Caco-2 (cell line): ENCODE measurements at regions of chr3 and their contacts with region 1.

Region 1: DNA sequence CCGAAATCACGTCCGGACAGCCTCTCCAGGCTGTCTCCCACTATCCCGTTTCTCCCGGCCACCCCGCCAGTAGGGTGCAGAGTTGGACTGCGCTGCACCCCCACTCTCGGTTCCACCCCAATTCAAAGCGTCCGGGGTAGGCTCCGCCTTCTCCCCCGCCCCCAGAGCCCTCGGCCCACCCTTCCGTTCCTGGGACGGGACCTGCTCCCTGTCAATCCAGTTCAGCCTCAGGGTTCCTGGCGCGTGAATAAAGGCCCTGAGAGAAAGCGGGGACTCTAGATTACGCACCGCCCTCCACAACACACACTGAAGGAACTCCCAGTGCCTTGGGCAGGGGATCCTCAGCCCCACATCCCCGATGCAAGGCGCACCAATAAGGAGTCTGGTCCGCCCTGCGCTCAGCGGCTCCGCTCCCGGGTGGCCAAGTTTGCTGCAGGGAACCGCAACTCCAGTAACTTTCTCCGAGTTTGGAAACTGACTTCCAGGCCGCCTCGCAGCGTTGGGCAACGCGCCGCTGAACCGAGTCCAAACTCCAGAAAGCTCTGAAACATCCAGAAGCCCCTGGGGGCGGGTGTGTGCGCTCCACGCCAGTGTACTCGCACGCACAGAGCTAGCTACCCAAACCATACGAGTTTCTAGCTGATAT is 1.9 kb downstream of the ADAMTS9 start:
- DNase-seq: peak; percentile 91 to 94
- H3K4me3 ChIP-seq: peak overlapping the region; percentile 71
- H3K4me3 Mint-ChIP-seq: peak overlapping the region; percentile 87
- H3K27ac Mint-ChIP-seq: peak overlapping the region; percentile 14
- H3K4me1 ChIP-seq: peaks cover 6% of the 10 kb centered on the region; the same call in 1 of the 2 replicates
- H3K4me1 Mint-ChIP-seq: peaks cover 7% of the 10 kb centered on the region
- H3K27me3 ChIP-seq: no peaks in the 10 kb centered on the region
- H3K27me3 Mint-ChIP-seq: peaks cover 3% of the 10 kb centered on the region
- CTCF ChIP-seq: peak; percentile 22 to 56

Region 2: DNA sequence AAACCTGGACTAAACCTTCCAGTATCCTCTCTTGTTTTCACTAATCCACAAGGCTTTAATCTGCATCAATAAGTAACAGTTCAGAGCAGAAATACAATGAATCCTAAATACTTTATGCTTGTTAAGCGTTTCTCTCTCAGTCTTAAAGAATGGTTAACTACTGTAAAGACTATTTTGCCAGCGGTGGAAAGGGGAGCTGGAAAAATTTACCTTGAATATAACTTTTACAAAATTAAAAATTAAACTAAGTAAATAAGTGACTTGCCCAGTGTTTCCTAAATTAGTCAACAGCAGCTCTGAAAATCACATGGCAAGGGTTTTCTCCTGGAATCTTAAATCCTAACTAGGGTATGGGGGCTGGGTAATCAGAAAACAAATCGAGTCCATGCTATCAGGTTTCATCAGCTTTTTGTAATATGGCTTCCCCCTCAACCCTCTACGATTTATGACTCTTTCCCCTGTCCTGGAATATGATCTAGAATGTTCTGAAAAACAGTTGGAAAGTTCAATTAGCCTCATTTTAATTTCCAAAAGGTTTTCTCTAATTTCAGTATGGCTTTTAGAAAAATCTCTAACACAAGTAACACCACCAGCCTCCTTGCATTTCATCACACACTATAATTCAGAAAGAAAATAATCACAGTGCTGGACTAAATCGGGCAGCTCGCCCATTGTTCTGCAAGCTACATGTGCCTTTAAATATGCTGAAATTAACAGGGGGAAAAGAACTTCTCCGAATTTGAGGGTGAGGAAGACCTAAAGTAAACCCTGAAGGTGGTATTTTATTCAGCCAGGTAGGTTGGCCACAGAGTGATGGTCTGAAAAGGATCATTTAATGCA is 131.6 kb before region 1 on chr3:
- CTCF ChIA-PET with region 1: no interaction called
- POLR2A ChIA-PET with region 1: no interaction called
- intact Hi-C with region 1: loop called (anchors 5 kb)
- DNase-seq: no peak
- H3K4me3 ChIP-seq: no peak overlapping the region
- H3K4me3 Mint-ChIP-seq: no peak overlapping the region
- H3K27ac Mint-ChIP-seq: no peak overlapping the region
- H3K4me1 ChIP-seq: peaks cover 29% of the 10 kb centered on the region
- H3K4me1 Mint-ChIP-seq: peaks cover 23% of the 10 kb centered on the region
- H3K27me3 ChIP-seq: no peaks in the 10 kb centered on the region
- H3K27me3 Mint-ChIP-seq: peaks cover 3% of the 10 kb centered on the region
- CTCF ChIP-seq: no peak

Region 3: DNA sequence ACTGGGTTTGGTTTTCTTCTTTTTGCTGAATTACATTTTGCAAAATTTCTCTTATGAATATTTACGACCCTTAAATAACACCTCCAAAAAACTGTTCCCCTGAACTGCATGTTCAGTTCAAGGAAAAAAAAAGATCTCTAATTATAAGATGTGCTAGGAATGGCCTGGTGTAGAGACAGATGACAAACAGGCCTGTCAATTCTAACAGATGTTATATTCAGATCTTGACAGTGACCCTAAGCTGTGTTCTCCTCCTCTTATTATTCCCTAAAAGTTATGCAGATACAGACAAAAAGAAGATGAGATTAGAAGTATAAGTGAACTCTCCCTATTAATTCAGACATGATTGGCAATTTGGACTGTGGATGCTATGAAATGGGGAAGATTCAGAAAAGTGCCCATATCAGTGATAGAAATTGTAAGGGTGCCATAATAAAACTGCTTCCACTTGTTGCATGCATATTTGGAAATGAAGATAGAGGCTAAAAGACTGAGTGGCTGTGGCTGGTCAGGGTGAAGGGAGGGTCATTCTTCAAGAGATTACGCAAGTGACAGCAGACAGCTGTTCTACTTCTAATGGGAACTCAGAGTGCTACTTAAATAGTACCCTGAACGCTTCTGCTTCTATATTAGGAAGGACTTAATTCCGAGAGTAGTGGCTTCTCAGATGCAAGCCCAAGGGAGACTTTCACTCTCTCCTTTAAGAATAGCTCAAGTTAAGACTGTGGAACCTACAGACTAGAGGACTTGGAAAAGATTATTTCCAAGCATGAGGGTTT is 73.7 kb before region 1 on chr3:
- CTCF ChIA-PET with region 1: no interaction called
- POLR2A ChIA-PET with region 1: no interaction called
- intact Hi-C with region 1: loop called (anchors 2 kb)
- DNase-seq: peak; percentile 37 to 50
- H3K4me3 ChIP-seq: no peak overlapping the region
- H3K4me3 Mint-ChIP-seq: peak overlapping the region; percentile 68
- H3K27ac Mint-ChIP-seq: peak overlapping the region; percentile 90
- H3K4me1 ChIP-seq: peaks cover 27% of the 10 kb centered on the region
- H3K4me1 Mint-ChIP-seq: peaks cover 20% of the 10 kb centered on the region
- H3K27me3 ChIP-seq: no peaks in the 10 kb centered on the region; the same call in 1 of the 2 replicates
- H3K27me3 Mint-ChIP-seq: no peaks in the 10 kb centered on the region
- CTCF ChIP-seq: no peak

Region 4: GRCh38 chr3:64837126-64837738 is 151.3 kb after region 1 on chr3:
- CTCF ChIA-PET with region 1: no interaction called
- POLR2A ChIA-PET with region 1: no interaction called
- intact Hi-C with region 1: no loop called
- DNase-seq: no peak
- H3K4me3 ChIP-seq: no peak overlapping the region
- H3K4me3 Mint-ChIP-seq: no peak overlapping the region
- H3K27ac Mint-ChIP-seq: no peak overlapping the region
- H3K4me1 ChIP-seq: no peaks in the 10 kb centered on the region
- H3K4me1 Mint-ChIP-seq: no peaks in the 10 kb centered on the region
- H3K27me3 ChIP-seq: no peaks in the 10 kb centered on the region
- H3K27me3 Mint-ChIP-seq: no peaks in the 10 kb centered on the region
- CTCF ChIP-seq: no peak

Region 5: GRCh38 chr3:65080432-65080831 is 394.5 kb after region 1 on chr3:
- CTCF ChIA-PET with region 1: no interaction called
- POLR2A ChIA-PET with region 1: no interaction called
- intact Hi-C with region 1: loop called (anchors 10 kb)
- DNase-seq: peak; percentile 26 to 39
- H3K4me3 ChIP-seq: no peak overlapping the region
- H3K4me3 Mint-ChIP-seq: no peak overlapping the region
- H3K27ac Mint-ChIP-seq: no peak overlapping the region
- H3K4me1 ChIP-seq: peaks cover 2% of the 10 kb centered on the region; the same call in 1 of the 2 replicates
- H3K4me1 Mint-ChIP-seq: no peaks in the 10 kb centered on the region
- H3K27me3 ChIP-seq: no peaks in the 10 kb centered on the region
- H3K27me3 Mint-ChIP-seq: no peaks in the 10 kb centered on the region
- CTCF ChIP-seq: peak in 1 of 2 experiments; percentile 47

Region 6: GRCh38 chr3:65245133-65246063 is 559.5 kb after region 1 on chr3:
- CTCF ChIA-PET with region 1: no interaction called
- POLR2A ChIA-PET with region 1: no interaction called
- intact Hi-C with region 1: loop called (anchors 5 kb)
- DNase-seq: no peak
- H3K4me3 ChIP-seq: no peak overlapping the region
- H3K4me3 Mint-ChIP-seq: no peak overlapping the region
- H3K27ac Mint-ChIP-seq: no peak overlapping the region
- H3K4me1 ChIP-seq: peaks cover 16% of the 10 kb centered on the region
- H3K4me1 Mint-ChIP-seq: peaks cover 16% of the 10 kb centered on the region
- H3K27me3 ChIP-seq: no peaks in the 10 kb centered on the region
- H3K27me3 Mint-ChIP-seq: no peaks in the 10 kb centered on the region
- CTCF ChIP-seq: no peak

Region 7: GRCh38 chr3:65412588-65412987 is 726.7 kb after region 1 on chr3:
- CTCF ChIA-PET with region 1: no interaction called
- POLR2A ChIA-PET with region 1: no interaction called
- intact Hi-C with region 1: loop called (anchors 10 kb)
- DNase-seq: peak; percentile 16 to 50
- H3K4me3 ChIP-seq: no peak overlapping the region
- H3K4me3 Mint-ChIP-seq: no peak overlapping the region
- H3K27ac Mint-ChIP-seq: no peak overlapping the region
- H3K4me1 ChIP-seq: no peaks in the 10 kb centered on the region
- H3K4me1 Mint-ChIP-seq: peaks cover 4% of the 10 kb centered on the region
- H3K27me3 ChIP-seq: no peaks in the 10 kb centered on the region
- H3K27me3 Mint-ChIP-seq: no peaks in the 10 kb centered on the region
- CTCF ChIP-seq: peak in 1 of 2 experiments; percentile 37

Region 8: GRCh38 chr3:65439641-65440284 is 753.8 kb after region 1 on chr3:
- CTCF ChIA-PET with region 1: no interaction called
- POLR2A ChIA-PET with region 1: no interaction called
- intact Hi-C with region 1: loop called (anchors 5 kb)
- DNase-seq: peak; percentile 49 to 57
- H3K4me3 ChIP-seq: no peak overlapping the region
- H3K4me3 Mint-ChIP-seq: no peak overlapping the region
- H3K27ac Mint-ChIP-seq: no peak overlapping the region
- H3K4me1 ChIP-seq: no peaks in the 10 kb centered on the region
- H3K4me1 Mint-ChIP-seq: no peaks in the 10 kb centered on the region
- H3K27me3 ChIP-seq: no peaks in the 10 kb centered on the region
- H3K27me3 Mint-ChIP-seq: no peaks in the 10 kb centered on the region
- CTCF ChIP-seq: peak; percentile 50 to 67